ENCODE measurements at regions of chr14 and their contacts with region 1.

Region 1: DNA sequence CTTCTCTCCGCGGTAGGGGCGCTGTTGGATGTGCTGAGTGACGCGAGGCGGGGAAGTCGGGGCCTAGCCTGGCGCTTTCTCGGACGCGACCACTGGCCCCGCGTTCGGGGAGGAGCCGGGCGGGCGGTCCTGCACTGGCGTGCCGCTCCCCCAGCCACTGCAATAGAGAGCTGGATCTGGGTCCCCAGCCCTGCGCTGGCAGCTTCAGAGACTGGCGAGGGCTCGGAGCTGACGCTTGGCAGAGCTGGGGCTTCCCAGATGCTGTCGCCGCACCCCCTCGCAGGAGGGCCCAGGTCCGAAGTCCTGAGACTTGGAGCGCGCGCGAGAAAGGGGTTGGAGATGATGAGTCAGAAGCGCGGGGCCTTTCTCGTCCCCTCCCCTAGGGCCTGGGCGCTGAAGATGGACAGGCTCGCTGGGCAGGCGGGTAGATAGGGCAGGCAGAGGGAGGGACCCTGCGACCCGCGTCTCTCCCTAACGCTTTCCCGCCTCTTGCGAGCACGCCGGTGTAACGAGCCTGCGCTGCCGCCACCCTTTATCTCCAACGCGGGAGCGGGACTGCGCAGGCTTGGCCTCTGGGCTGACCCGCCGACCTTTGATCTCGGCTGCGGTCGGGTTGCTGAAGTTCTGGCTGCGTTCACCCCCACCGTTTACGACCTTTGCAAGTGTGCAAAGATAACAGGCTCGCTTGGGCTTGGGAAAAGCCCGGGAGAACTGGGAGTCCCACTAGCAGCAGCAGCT is 3.0 kb downstream of the TMEM253 start:
- DNase-seq: peak; percentile 97
- ATAC-seq: peak; percentile 88
- H3K4me3 Mint-ChIP-seq: peak overlapping the region; percentile 83
- H3K27ac Mint-ChIP-seq: peak overlapping the region; percentile 98
- H3K4me1 Mint-ChIP-seq: peaks cover 38% of the 10 kb centered on the region
- H3K27me3 Mint-ChIP-seq: no peaks in the 10 kb centered on the region

Region 2: GRCh38 chr14:20343092-20343861 is 760.6 kb before region 1 on chr14 and contains the start of gene PARP2:
- CTCF ChIA-PET with region 1: no interaction called
- POLR2A ChIA-PET with region 1: no interaction called
- intact Hi-C with region 1: loop called in 1 of 2 experiments (anchors 2 kb)
- DNase-seq: peak; percentile 97
- ATAC-seq: peak; percentile 95
- H3K4me3 Mint-ChIP-seq: peak within 1 kb of the TSS; percentile 89
- H3K27ac Mint-ChIP-seq: peak within 1 kb of the TSS; percentile 92
- H3K4me1 Mint-ChIP-seq: peaks cover 20% of the 10 kb centered on the region
- H3K27me3 Mint-ChIP-seq: no peaks in the 10 kb centered on the region
- total RNA-seq, gene PARP2: 39.4 to 41.8 TPM

Region 3: GRCh38 chr14:20682435-20683124 is 421.3 kb before region 1 on chr14:
- CTCF ChIA-PET with region 1: interaction called, 3 read pairs
- POLR2A ChIA-PET with region 1: no interaction called
- intact Hi-C with region 1: loop called (anchors 1 to 2 kb)
- DNase-seq: peak; percentile 88
- ATAC-seq: peak; percentile 68
- H3K4me3 Mint-ChIP-seq: no peak overlapping the region
- H3K27ac Mint-ChIP-seq: no peak overlapping the region
- H3K4me1 Mint-ChIP-seq: peaks cover 30% of the 10 kb centered on the region
- H3K27me3 Mint-ChIP-seq: no peaks in the 10 kb centered on the region

Region 4: GRCh38 chr14:21014761-21015190 is 89.1 kb before region 1 on chr14:
- CTCF ChIA-PET with region 1: interaction called, 111 read pairs
- POLR2A ChIA-PET with region 1: interaction called, 14 read pairs
- intact Hi-C with region 1: loop called (anchors 1 kb)
- DNase-seq: peak; percentile 87
- ATAC-seq: peak; percentile 87
- H3K4me3 Mint-ChIP-seq: no peak overlapping the region
- H3K27ac Mint-ChIP-seq: no peak overlapping the region
- H3K4me1 Mint-ChIP-seq: no peaks in the 10 kb centered on the region
- H3K27me3 Mint-ChIP-seq: peaks cover 15% of the 10 kb centered on the region

Region 5: DNA sequence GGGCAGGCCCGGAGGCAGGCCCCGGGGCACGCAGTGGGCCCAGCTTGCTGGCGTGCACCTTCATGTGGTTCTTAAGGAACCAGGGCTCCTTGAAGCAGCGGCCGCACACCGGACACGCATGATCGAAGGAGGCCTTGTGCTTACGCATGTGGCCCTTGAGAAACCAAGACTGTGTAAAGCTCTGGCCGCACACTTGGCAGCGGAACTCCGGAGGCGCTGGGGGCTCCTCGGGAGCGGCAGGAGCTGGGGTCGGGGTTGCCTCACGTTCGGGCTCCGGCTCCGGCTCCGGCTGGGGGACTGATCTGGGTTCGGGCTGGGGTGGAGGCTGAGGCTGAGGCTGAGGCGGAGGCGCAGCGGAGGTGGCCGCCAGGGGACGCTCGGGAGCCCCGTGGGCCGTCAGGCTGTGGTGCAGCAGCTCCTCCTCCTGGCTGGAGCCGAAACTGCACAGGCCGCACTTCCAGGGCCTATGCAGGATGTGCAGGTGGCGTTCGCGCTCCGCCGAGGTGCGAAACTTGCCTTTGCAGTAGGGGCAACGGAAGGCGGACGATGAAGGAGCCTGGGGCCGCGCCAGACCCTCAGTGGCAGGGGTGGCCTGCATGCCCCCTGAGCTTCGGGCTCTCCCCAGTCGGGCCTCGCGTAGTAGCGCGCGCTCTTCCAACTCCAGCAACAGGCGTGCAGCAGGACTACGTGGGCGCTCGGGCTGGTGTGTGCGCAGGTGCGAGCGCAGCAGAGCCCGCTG is 11.4 kb before region 1 on chr14:
- CTCF ChIA-PET with region 1: interaction called, 66 read pairs
- POLR2A ChIA-PET with region 1: interaction called, 3 read pairs
- intact Hi-C with region 1: loop called (anchors 1 kb)
- DNase-seq: peak; percentile 95
- ATAC-seq: peak; percentile 91
- H3K4me3 Mint-ChIP-seq: no peak overlapping the region
- H3K27ac Mint-ChIP-seq: no peak overlapping the region
- H3K4me1 Mint-ChIP-seq: peaks cover 17% of the 10 kb centered on the region
- H3K27me3 Mint-ChIP-seq: no peaks in the 10 kb centered on the region

Region 6: DNA sequence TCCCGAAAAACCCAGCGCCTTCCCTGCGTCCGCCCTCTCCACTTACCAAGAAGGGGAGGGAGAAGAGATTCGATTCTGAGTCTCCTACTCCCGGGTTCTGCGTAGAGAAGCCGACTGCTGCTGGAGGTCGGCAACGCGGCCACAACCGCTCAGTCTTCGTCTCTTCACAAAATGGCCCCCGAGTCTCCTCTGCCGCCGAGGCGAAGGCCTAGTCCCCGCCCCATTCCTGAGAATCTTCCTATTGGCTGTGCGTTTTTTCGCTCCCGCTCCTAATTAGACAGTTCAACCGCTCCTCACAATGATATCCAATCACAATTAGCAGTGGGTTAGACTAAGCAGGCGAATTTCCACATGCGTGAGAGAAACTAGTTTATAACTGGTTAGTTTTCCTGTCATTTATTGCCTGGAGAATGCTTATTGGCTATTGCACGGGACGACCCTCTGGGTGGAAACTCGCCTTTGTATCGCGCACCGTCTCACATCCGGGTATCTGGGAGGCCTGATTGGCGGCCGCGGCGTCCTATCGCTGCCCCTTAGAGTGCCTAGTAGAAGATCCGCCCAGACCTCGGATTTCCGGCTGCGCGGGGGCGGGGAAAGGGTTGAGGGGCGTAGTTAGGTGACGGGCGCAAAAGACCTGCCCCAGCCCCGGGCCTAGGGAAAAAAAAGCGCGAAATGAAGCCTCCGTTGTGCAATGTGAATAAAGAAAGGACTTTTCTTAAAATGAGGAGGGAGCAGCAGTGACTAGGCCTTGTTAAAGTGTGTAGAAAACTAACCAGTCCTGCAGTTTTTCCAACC is 165.6 kb after region 1 on chr14 and contains the start of gene HNRNPC:
- CTCF ChIA-PET with region 1: no interaction called
- POLR2A ChIA-PET with region 1: interaction called, 3 read pairs
- intact Hi-C with region 1: loop called in 1 of 2 experiments (anchors 1 kb)
- DNase-seq: peak; percentile 100
- ATAC-seq: peak; percentile 89
- H3K4me3 Mint-ChIP-seq: peak within 1 kb of the TSS; percentile 93
- H3K27ac Mint-ChIP-seq: peak within 1 kb of the TSS; percentile 100
- H3K4me1 Mint-ChIP-seq: peaks cover 25% of the 10 kb centered on the region
- H3K27me3 Mint-ChIP-seq: no peaks in the 10 kb centered on the region
- total RNA-seq, gene HNRNPC: 1,155 to 1,665 TPM

Region 7: GRCh38 chr14:21557084-21557901 is 453.4 kb after region 1 on chr14:
- CTCF ChIA-PET with region 1: no interaction called
- POLR2A ChIA-PET with region 1: no interaction called
- intact Hi-C with region 1: loop called in 1 of 2 experiments (anchors 1 kb)
- DNase-seq: peak; percentile 87
- ATAC-seq: peak; percentile 68
- H3K4me3 Mint-ChIP-seq: no peak overlapping the region
- H3K27ac Mint-ChIP-seq: no peak overlapping the region
- H3K4me1 Mint-ChIP-seq: peaks cover 4% of the 10 kb centered on the region
- H3K27me3 Mint-ChIP-seq: no peaks in the 10 kb centered on the region

Region 8: GRCh38 chr14:21833836-21834235 is 730.0 kb after region 1 on chr14:
- CTCF ChIA-PET with region 1: no interaction called
- POLR2A ChIA-PET with region 1: no interaction called
- intact Hi-C with region 1: no loop called
- DNase-seq: no peak
- ATAC-seq: peak; percentile 47
- H3K4me3 Mint-ChIP-seq: no peak overlapping the region
- H3K27ac Mint-ChIP-seq: no peak overlapping the region
- H3K4me1 Mint-ChIP-seq: no peaks in the 10 kb centered on the region
- H3K27me3 Mint-ChIP-seq: peaks cover 18% of the 10 kb centered on the region

Measured in activated CD4-positive, alpha-beta T cell treated with anti-CD3 and anti-CD28 coated beads for 36 hours (primary cell).